HCT116 (cell line): ENCODE measurements at regions of chr14 and their contacts with region 1.

Region 1: GRCh38 chr14:34699873-34700621 is 14.3 kb downstream of the CFL2 start:
- DNase-seq: peak; percentile 72
- ATAC-seq: peak; percentile 84
- H3K4me3 ChIP-seq: peak overlapping the region in 1 of 2 experiments; percentile 35; a peak in 2 of 4 replicates
- H3K27ac ChIP-seq: peak overlapping the region; percentile 68
- H3K4me1 ChIP-seq: peaks cover 24 to 34% of the 10 kb centered on the region in 2 experiments
- H3K27me3 ChIP-seq: no peaks in the 10 kb centered on the region
- CTCF ChIP-seq: no peak
- POLR2A ChIP-seq: no peak
- RAD21 ChIP-seq: peak; percentile 14; the same call in 1 of the 2 replicates

Region 2: GRCh38 chr14:34714320-34715126 is 14.5 kb after region 1 on chr14 and contains the start of gene CFL2:
- CTCF ChIA-PET with region 1: no interaction called
- POLR2A ChIA-PET with region 1: interaction called, 14 read pairs
- RAD21 ChIA-PET with region 1: no interaction called
- intact Hi-C with region 1: no loop called
- DNase-seq: peak; percentile 32
- ATAC-seq: peak; percentile 96
- H3K4me3 ChIP-seq: peak within 1 kb of the TSS; percentile 73
- H3K27ac ChIP-seq: peak within 1 kb of the TSS; percentile 73
- H3K4me1 ChIP-seq: peaks cover 10 to 41% of the 10 kb centered on the region in 2 experiments
- H3K27me3 ChIP-seq: no peaks in the 10 kb centered on the region
- CTCF ChIP-seq: no peak
- POLR2A ChIP-seq: no peak
- RAD21 ChIP-seq: no peak
- total RNA-seq, gene CFL2: 55.2 TPM

Region 3: DNA sequence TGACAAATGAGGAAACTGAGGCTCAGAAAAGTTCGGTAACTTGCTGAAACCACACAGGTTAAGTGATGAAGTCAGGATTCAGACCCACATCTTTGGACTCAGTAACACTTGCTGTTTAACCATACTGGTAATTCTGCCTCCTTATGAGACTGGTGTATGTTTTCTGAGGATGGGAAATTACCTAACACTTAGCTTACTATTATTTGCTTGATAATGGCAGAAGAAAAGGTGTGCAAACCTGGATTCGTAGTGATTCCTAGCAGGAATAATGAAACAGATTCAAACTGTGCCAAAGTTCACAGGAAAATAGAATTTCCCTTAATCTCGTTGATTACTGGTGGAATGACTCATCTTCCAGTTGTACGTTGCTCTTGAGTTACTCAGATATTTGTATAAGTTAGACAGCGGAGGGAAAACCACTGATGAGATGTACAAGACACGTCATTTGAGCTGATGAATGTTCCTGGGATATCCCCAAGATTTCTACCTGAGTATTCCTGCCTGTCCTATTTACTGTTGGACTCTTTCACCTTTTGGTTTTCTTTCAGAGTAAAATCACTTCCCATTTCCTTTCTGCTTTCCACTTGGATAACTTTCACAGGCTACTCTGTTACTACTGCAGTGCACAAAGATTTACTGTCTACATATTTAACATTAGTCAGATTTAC is 459.8 kb after region 1 on chr14:
- CTCF ChIA-PET with region 1: no interaction called
- POLR2A ChIA-PET with region 1: no interaction called
- RAD21 ChIA-PET with region 1: no interaction called
- intact Hi-C with region 1: no loop called
- DNase-seq: peak; percentile 88
- ATAC-seq: peak; percentile 94
- H3K4me3 ChIP-seq: peak overlapping the region in 1 of 2 experiments; percentile 2; a peak in 2 of 4 replicates
- H3K27ac ChIP-seq: no peak overlapping the region; the same call in 1 of the 2 replicates
- H3K4me1 ChIP-seq: peaks cover 12 to 22% of the 10 kb centered on the region in 2 experiments
- H3K27me3 ChIP-seq: no peaks in the 10 kb centered on the region
- CTCF ChIP-seq: no peak
- POLR2A ChIP-seq: no peak
- RAD21 ChIP-seq: no peak